IMR-90 (cell line): ENCODE measurements at regions of chr1 and their contacts with region 1.

Region 1: GRCh38 chr1:106382758-106383157 is 673.7 kb upstream of the PRMT6 start:
- DNase-seq: no peak
- ATAC-seq: no peak
- H3K4me3 ChIP-seq: no peak overlapping the region
- H3K27ac ChIP-seq: no peak overlapping the region
- H3K4me1 ChIP-seq: no peaks in the 10 kb centered on the region
- H3K27me3 ChIP-seq: no peaks in the 10 kb centered on the region
- CTCF ChIP-seq: no peak
- POLR2A ChIP-seq: no peak
- RAD21 ChIP-seq: no peak

Region 2: DNA sequence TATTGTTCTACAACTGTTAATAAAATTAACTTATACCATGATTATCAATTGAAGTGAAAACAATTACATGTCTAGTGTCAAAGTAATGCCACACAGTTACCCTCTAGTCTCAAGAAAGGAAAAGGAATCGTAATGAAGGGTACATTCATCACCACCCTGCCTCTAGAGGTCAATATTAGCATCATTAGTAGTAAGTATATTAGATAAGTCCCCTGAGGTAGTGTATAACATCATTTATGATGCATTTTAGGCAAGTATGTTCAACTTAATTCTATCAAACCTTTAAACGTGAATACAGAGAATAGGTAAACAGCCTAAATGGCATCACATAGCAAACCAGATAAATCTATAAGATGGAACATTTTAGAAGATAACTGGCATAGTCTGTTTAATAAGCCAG is 56.3 kb before region 1 on chr1:
- CTCF ChIA-PET with region 1: no interaction called
- POLR2A ChIA-PET with region 1: no interaction called
- dilution Hi-C with region 1: no loop called
- in situ Hi-C with region 1: no loop called
- intact Hi-C with region 1: loop called (anchors 2 kb)
- DNase-seq: no peak
- ATAC-seq: no peak
- H3K4me3 ChIP-seq: no peak overlapping the region
- H3K27ac ChIP-seq: no peak overlapping the region
- H3K4me1 ChIP-seq: no peaks in the 10 kb centered on the region
- H3K27me3 ChIP-seq: no peaks in the 10 kb centered on the region
- CTCF ChIP-seq: no peak
- POLR2A ChIP-seq: no peak
- RAD21 ChIP-seq: no peak

Region 3: DNA sequence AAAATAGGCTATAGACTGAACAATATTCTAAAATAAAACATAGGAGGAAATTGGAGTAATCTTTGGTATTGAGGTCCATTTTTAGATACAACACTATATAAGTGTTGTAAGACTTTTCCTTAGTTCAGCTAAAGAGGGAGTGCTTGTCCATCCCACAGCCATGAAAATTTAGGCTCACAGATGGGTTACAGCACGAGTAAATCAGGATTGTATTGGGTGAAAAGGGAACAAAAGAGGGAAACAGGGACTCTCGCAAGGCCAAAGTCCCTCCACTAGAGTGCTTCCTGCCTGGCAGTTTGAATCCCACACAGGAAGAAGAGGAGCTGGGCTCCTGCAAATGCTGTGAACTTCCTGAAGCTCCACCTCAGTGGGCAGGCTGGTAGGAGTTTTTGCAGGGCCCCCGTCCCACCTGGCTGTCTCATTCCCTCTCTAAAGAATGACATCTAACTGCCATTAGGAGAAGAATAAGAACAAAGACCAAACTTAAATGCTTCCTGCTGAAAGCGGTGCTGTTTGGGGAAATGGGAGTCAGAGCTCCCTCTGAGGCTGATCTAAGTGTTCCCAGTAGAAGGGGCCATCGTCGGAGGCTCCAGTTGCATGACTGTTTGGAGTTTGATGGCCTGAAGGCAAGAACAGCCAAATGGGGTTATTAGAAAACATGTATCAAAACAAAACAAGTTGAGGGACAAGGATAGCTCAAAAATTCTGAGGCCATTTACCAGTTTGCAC is 38.2 kb before region 1 on chr1:
- CTCF ChIA-PET with region 1: no interaction called
- POLR2A ChIA-PET with region 1: no interaction called
- dilution Hi-C with region 1: no loop called
- in situ Hi-C with region 1: no loop called
- intact Hi-C with region 1: no loop called
- DNase-seq: no peak
- ATAC-seq: no peak
- H3K4me3 ChIP-seq: no peak overlapping the region
- H3K27ac ChIP-seq: no peak overlapping the region
- H3K4me1 ChIP-seq: no peaks in the 10 kb centered on the region
- H3K27me3 ChIP-seq: no peaks in the 10 kb centered on the region
- CTCF ChIP-seq: no peak
- POLR2A ChIP-seq: no peak
- RAD21 ChIP-seq: no peak

Region 4: DNA sequence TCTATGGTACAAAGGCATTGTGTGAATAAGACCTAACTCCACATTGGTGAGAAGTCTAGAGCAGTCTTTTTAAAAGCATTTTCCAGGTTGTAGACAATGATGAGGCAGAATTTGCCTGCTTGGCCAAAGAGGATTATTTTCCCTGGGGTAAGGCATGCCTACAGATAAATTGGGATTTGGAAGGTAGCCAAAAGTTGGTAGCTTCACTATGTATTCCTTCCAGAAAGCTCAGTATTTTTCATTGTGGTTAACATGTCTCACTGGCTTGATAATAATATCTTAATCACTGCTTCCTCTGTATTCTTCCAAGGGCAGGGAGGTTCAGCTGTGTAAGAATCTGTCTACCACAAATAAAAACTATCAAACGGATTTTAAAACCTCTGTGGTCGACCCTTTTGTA is 82.9 kb after region 1 on chr1:
- CTCF ChIA-PET with region 1: no interaction called
- POLR2A ChIA-PET with region 1: no interaction called
- dilution Hi-C with region 1: no loop called
- in situ Hi-C with region 1: no loop called
- intact Hi-C with region 1: no loop called
- DNase-seq: no peak
- ATAC-seq: no peak
- H3K4me3 ChIP-seq: no peak overlapping the region
- H3K27ac ChIP-seq: no peak overlapping the region
- H3K4me1 ChIP-seq: no peaks in the 10 kb centered on the region
- H3K27me3 ChIP-seq: no peaks in the 10 kb centered on the region
- CTCF ChIP-seq: no peak
- POLR2A ChIP-seq: no peak
- RAD21 ChIP-seq: no peak

Region 5: DNA sequence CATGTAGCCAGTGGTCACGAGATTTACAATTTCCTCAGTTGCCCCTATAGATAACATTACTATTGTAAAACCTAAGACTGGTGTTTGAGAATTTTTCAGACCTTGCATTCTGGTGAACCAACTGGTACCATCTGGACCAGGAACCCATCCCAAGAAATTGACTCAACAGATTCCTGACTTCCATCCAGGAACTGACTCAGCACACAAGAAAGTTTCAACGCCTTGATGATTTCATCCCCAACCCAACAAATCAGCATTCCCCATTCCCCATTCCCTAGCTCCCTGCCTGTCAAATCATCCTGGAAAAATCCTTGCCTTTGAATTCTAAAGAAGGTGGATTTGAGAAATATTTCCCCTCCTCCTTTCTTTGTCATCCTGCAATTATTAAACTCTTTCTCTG is 143.9 kb after region 1 on chr1:
- CTCF ChIA-PET with region 1: no interaction called
- POLR2A ChIA-PET with region 1: no interaction called
- dilution Hi-C with region 1: no loop called
- in situ Hi-C with region 1: no loop called
- intact Hi-C with region 1: no loop called
- DNase-seq: peak; percentile 46
- ATAC-seq: no peak
- H3K4me3 ChIP-seq: no peak overlapping the region
- H3K27ac ChIP-seq: no peak overlapping the region
- H3K4me1 ChIP-seq: no peaks in the 10 kb centered on the region
- H3K27me3 ChIP-seq: no peaks in the 10 kb centered on the region
- CTCF ChIP-seq: no peak
- POLR2A ChIP-seq: no peak
- RAD21 ChIP-seq: no peak